MCF 10A (cell line): ENCODE measurements at regions of chr5 and their contacts with region 1.

Region 1: DNA sequence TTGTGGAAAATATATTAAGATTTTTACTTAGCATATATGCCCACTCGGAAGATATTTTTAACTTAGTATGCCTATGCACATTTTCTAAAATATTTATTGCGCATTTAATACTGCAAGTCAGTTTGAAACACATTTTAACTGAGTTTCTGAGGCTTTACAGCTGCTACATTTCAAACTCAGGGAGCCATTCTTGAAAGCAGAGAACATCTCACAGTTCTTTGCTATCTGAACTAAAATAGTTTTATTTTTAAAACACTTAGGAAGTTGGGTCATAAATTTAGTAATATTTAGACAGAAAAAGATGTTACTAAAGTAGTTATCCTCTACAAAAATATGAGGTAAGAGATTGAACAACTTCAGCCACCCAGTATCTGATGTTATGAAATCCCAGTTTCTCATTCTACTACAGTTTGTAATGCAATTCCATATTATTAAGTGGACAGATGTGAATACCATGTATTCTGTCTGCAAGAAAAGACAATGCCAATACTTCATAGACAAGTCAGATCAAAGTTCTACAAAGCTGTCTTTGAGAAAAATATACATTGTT is 409.9 kb upstream of the EDIL3 start:
- DNase-seq: no peak
- H3K4me3 Mint-ChIP-seq: no peak overlapping the region
- H3K27ac Mint-ChIP-seq: no peak overlapping the region
- H3K4me1 Mint-ChIP-seq: no peaks in the 10 kb centered on the region
- H3K27me3 Mint-ChIP-seq: peaks cover 14% of the 10 kb centered on the region
- CTCF ChIP-seq: no peak

Region 2: GRCh38 chr5:85225388-85225787 is 430.8 kb after region 1 on chr5:
- CTCF ChIA-PET with region 1: no interaction called
- POLR2A ChIA-PET with region 1: no interaction called
- intact Hi-C with region 1: loop called (anchors 5 kb)
- DNase-seq: no peak
- H3K4me3 Mint-ChIP-seq: no peak overlapping the region
- H3K27ac Mint-ChIP-seq: no peak overlapping the region
- H3K4me1 Mint-ChIP-seq: no peaks in the 10 kb centered on the region
- H3K27me3 Mint-ChIP-seq: no peaks in the 10 kb centered on the region
- CTCF ChIP-seq: no peak